ENCODE measurements at regions of chr21 and their contacts with region 1.

Region 1: DNA sequence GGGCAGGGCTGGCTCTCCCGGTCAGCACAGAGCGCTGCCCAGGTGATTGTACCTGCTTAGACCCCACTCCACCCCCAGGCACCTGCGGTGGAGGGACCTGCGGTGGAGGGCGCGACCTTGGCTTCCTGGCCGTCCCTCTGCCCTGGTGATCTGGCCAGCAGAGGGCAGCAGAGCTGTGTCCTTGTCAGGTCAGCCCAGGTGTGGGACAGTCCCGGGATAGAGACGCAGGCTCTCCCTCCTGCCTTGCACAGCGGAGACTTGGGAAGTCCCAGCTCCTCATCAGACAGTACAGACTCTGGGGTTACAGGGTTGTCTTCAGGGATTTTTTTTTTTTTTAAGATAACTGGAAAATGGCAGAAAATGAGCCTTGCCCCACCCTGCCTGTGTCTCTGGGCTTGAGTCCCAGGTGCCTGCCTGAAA is 10.0 kb downstream of the SLX9 start:
- DNase-seq: peak; percentile 94
- H3K4me3 Mint-ChIP-seq: no peak overlapping the region
- H3K27ac Mint-ChIP-seq: no peak overlapping the region
- H3K4me1 Mint-ChIP-seq: peaks cover 7% of the 10 kb centered on the region
- H3K27me3 Mint-ChIP-seq: no peaks in the 10 kb centered on the region

Region 2: DNA sequence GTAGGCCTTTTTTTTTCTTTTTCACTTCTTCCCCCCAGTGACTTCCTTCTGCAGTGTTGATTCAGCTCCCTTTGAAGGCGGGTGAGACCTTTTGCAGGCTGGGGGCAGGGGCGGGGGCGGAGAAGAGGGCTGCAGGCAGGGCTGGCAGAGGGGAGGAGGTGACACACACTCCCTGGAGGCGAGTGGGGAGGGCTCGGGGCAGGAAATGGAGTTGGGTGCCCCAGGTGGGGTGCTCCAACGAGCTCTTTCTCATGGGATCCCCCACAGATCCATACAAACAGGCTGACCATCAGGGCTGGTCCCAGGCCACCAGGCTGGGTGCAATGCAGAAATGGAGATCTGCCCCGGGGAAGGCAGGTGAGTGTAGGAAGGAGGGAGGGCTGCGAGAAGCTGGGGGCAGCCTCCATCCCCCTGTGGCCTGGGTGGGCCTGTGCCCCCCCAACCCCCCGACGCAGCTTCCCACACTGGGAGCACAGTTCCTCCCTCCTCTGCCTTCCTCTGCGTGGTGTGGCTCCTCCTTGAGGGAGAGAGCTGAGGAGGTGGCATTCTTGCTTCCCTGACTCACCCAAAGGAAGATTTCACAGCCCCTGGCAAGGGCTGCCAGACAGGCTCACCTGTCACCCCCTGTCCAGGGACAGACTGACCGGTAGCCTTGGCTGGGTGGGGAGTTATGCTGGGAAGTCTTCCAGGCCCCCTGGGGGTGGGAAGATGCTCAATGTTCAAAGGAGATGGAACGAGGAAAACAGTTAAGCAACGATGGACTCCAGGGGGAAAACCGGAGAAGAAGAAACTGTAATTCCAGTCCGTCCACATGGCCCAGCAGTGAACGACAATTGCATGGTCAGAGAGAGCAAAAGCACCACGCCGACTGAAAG is 22.0 kb before region 1 on chr21:
- intact Hi-C with region 1: no loop called
- DNase-seq: peak; percentile 91
- H3K4me3 Mint-ChIP-seq: peak overlapping the region; percentile 94
- H3K27ac Mint-ChIP-seq: peak overlapping the region; percentile 99
- H3K4me1 Mint-ChIP-seq: peaks cover 78% of the 10 kb centered on the region
- H3K27me3 Mint-ChIP-seq: no peaks in the 10 kb centered on the region

Region 3: DNA sequence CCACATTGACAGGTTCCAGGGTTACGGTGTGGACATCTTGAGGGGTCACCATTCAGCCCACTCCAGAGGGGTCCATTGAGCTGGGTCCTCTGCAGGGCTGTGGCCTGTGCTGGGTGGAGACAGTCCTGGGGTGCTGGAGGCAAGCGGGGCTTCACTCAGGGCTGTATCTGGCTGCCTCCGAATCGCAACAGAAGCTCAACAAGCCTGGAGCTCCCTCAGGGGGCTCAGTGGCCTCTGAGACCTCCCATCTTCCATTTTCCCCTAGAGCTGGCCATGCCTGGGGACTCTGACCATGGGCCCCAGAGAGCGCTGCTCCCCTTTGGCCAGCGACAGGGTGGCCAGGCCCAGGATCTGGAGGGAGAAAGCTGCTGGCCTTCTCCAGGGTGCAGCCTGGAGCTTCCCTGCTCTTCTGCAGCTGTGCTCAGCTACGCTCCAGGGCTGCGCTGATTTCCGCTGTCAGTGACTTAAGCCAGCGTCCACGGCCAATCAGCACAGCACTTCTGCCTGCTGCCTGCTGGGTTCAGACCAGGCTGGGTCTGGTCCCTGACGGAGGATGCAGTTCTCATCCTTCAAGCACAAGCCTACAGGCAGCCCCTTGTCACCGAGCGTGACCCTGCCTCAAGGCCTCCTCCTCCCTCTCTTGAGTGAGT is 79.6 kb after region 1 on chr21:
- intact Hi-C with region 1: no loop called
- DNase-seq: peak; percentile 51
- H3K4me3 Mint-ChIP-seq: no peak overlapping the region
- H3K27ac Mint-ChIP-seq: no peak overlapping the region
- H3K4me1 Mint-ChIP-seq: no peaks in the 10 kb centered on the region
- H3K27me3 Mint-ChIP-seq: peaks cover 9% of the 10 kb centered on the region

Region 4: GRCh38 chr21:45129189-45129923 is 179.6 kb after region 1 on chr21:
- intact Hi-C with region 1: loop called (anchors 1 kb)
- DNase-seq: no peak
- H3K4me3 Mint-ChIP-seq: no peak overlapping the region
- H3K27ac Mint-ChIP-seq: no peak overlapping the region
- H3K4me1 Mint-ChIP-seq: peaks cover 24% of the 10 kb centered on the region
- H3K27me3 Mint-ChIP-seq: no peaks in the 10 kb centered on the region

Region 5: GRCh38 chr21:45140346-45140940 is 190.7 kb after region 1 on chr21:
- intact Hi-C with region 1: loop called (anchors 1 kb)
- DNase-seq: peak; percentile 89
- H3K4me3 Mint-ChIP-seq: no peak overlapping the region
- H3K27ac Mint-ChIP-seq: no peak overlapping the region
- H3K4me1 Mint-ChIP-seq: peaks cover 14% of the 10 kb centered on the region
- H3K27me3 Mint-ChIP-seq: no peaks in the 10 kb centered on the region